ENCODE measurements at regions of chr1 and their contacts with region 1.

Region 1: DNA sequence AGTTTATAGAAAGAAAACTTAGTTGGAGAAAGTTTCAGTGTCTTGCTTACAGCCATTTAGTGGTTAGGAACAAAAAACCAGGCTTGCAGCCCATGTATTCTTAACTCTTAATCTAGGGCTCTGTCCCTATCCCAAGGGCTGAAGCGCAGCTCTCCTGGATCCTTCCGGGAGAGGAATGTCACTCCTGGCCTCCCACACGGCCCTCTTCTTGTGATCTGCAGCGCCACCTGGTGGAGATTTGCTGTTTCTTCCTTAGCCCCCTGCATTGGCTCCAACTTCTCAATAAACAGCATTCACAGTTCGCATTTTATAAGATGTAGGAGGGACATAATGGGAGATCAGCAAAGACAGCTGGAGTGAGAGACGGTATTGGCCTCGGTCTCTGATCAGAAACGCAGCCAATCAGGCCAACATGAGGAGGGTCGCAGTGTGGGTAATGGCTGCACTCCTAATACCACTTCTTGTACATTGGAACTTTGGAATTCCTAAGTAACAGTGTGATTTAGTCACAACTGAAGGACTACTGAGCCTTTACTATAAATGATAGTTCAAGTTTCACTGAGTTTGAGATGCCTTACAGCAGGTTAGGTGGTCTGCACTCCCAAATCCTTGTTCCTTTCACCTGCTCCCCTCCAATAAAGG is 283.4 kb downstream of the ASTN1 start:
- H3K4me3 Mint-ChIP-seq: no peak overlapping the region
- H3K27ac Mint-ChIP-seq: no peak overlapping the region
- H3K4me1 Mint-ChIP-seq: no peaks in the 10 kb centered on the region
- H3K27me3 Mint-ChIP-seq: no peaks in the 10 kb centered on the region

Region 2: DNA sequence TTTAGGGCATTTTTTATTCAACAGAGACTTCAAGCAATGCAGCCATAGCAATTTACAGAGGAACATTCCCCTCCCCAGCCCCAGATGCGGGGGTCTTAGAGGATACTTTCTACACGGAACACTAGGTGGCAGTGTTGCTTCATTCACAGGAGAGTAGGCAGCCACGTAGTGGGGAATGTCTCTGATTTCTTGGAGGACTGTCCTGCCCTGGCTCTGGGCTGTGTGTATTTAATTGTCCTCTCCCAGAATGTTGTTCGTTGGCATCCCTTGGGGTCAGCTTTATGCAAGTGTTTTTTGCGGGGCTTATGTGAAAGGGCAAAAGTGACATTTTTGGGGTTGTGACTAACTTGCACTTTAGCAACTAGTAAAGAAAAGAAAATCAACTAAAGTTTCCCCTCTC is 321.2 kb before region 1 on chr1:
- intact Hi-C with region 1: loop called (anchors 2 kb)
- H3K4me3 Mint-ChIP-seq: no peak overlapping the region
- H3K27ac Mint-ChIP-seq: no peak overlapping the region
- H3K4me1 Mint-ChIP-seq: no peaks in the 10 kb centered on the region
- H3K27me3 Mint-ChIP-seq: no peaks in the 10 kb centered on the region

Region 3: DNA sequence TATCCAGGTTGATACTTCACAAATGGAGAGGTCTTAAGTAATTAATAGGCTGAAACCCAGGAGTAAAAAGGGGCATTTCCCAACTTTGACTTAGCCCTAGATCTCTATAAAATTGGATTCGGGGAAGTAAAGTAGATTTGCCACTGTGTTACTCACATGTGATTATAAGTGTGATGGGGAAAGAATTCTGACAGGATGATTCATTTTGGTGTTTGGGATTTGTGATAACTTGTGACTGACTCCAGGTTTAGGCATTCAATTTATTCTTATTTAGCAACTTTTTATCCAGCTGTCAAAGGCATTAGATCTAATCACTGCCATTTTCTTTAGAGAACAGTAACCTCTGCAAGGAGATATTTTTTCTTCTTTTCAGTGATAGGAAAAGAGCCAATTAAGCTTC is 107.9 kb after region 1 on chr1:
- intact Hi-C with region 1: no loop called
- H3K4me3 Mint-ChIP-seq: no peak overlapping the region
- H3K27ac Mint-ChIP-seq: no peak overlapping the region
- H3K4me1 Mint-ChIP-seq: no peaks in the 10 kb centered on the region
- H3K27me3 Mint-ChIP-seq: no peaks in the 10 kb centered on the region